Mammary epithelial cell (primary cell): ENCODE measurements at regions of chr4 and their contacts with region 1.

Region 1: DNA sequence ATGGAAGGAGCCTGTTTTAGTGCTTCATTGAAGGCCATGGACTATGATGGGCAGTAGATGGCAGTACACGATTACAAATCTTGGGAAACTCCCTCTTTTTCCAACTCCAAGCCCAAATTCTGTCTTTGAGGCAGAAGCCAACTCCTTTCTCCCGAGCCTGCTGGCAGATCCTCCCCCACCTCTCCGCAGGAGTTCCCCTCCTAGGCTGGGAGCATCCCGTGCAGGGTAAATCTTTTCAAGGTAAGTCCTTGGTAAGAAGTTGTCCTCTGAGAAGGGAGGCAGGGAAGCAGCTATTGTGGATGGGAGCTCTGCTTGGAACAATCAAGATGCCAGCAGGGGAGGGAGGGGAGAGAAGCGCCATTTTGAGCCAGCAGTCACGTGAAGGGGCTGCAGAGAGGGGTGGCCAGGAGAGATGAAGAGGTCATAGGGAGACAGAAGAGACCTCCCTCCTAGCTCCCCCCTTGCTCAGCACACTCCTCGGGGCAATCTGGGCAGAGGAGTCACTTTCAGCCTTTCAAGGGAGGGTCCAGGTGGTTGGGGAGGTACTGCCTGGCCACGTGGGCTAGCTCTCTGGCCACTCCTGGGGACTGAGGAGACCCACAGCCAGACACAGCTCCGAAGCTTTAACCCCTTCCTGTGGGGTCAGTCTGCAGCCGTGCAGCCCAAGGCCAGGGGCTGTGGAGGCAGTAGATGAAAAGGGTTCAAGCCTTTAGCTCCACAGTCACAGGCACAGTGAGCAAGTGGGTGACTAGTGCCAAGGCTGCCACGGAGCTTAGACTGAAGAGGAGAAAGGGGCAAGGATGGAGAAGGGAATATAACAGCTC is 9.6 kb downstream of the CC2D2A start:
- DNase-seq: peak; percentile 76
- H3K4me3 ChIP-seq: peak overlapping the region; percentile 42 to 61 (median 58)
- H3K27ac ChIP-seq: peak overlapping the region; percentile 47
- H3K4me1 ChIP-seq: peaks cover 3% of the 10 kb centered on the region
- H3K27me3 ChIP-seq: no peaks in the 10 kb centered on the region
- CTCF ChIP-seq: peak; percentile 71 to 79

Region 2: GRCh38 chr4:15551740-15552446 is 72.6 kb after region 1 on chr4:
- CTCF ChIA-PET with region 1: no interaction called
- dilution Hi-C with region 1: no loop called
- in situ Hi-C with region 1: no loop called
- intact Hi-C with region 1: no loop called
- DNase-seq: no peak
- H3K4me3 ChIP-seq: no peak overlapping the region
- H3K27ac ChIP-seq: no peak overlapping the region
- H3K4me1 ChIP-seq: no peaks in the 10 kb centered on the region
- H3K27me3 ChIP-seq: no peaks in the 10 kb centered on the region
- CTCF ChIP-seq: no peak

Region 3: DNA sequence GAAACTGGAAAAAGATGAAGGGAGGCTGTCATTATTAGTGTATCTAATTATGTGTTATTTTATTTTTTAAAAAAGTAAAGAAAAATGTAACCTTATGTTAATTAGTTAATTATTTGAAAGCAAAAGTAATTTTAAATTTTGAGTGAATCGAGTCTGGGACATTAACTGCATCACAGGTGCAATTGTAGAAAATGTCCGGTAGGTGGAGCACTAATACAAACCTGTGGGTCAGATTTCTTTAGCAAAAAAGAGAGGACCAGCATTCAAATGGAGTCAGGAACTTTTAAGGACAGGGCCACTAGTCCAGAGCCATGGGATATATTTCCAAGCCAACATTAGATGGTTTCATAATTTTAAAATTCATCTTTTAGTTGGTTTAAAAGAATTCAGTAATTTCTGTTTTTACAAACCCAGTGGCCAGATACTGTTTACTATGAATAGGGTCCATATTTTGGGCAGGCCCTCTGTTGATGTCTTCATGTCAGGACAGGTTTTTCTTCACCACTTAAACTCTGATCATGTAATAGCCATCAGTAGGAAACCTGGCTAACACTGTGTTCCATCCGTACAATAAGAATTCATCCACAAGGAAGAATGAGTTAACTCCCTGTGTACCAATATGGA is 250.7 kb after region 1 on chr4:
- CTCF ChIA-PET with region 1: no interaction called
- dilution Hi-C with region 1: no loop called
- in situ Hi-C with region 1: no loop called
- intact Hi-C with region 1: loop called (anchors 1 kb)
- DNase-seq: peak; percentile 33
- H3K4me3 ChIP-seq: no peak overlapping the region
- H3K27ac ChIP-seq: no peak overlapping the region
- H3K4me1 ChIP-seq: peaks cover 5% of the 10 kb centered on the region
- H3K27me3 ChIP-seq: no peaks in the 10 kb centered on the region
- CTCF ChIP-seq: peak; percentile 74

Region 4: DNA sequence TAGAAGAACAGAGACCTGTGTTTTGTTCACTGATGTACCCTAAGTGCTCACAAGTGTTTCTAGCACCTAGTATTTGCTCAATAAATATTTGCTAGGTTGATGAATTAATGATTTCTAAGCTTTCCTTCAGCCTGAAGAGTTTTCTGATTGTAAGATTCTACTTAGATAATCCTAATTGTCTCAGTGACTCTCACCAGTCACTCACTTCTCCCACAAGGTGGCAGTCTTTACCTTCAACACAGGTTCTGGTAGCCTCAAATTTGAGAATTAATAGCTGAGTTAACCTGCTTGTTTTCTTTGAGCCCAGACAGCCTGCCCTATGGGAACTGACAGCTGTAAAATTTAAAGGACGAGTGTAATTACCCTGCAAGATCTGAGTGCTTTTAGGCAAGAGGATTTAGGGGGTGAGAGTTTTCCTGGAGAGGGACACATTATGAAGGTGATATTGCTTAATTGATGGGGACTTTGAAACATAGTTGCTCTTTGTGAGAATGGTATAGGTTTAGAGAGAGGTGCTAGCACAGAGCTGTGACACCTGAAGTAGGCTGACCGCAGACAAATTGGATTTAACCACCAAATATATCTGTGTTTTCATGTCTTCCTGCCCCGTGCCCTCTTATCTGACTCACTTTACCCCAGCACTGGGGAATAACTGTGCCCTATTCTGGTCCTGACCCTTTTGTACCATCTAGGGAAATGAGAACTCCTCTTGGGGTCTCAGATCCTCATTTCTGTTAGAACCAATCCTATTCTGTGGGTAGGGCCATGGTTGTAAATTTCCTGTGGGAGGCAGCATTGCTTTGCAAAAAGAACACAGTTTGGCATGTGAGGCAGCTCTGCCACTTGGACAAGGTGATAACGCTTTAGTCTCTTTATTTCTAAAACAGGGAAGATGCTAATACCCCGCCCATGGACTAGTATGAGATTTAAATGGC is 326.5 kb after region 1 on chr4:
- CTCF ChIA-PET with region 1: interaction called, 9 read pairs
- dilution Hi-C with region 1: no loop called
- in situ Hi-C with region 1: no loop called
- intact Hi-C with region 1: loop called (anchors 1 kb)
- DNase-seq: peak; percentile 56
- H3K4me3 ChIP-seq: no peak overlapping the region
- H3K27ac ChIP-seq: no peak overlapping the region
- H3K4me1 ChIP-seq: no peaks in the 10 kb centered on the region
- H3K27me3 ChIP-seq: no peaks in the 10 kb centered on the region
- CTCF ChIP-seq: peak; percentile 82 to 86

Region 5: GRCh38 chr4:15956179-15956850 is 477.0 kb after region 1 on chr4:
- CTCF ChIA-PET with region 1: no interaction called
- dilution Hi-C with region 1: no loop called
- in situ Hi-C with region 1: loop called (anchors 25 kb)
- intact Hi-C with region 1: loop called (anchors 1 kb)
- DNase-seq: peak; percentile 68
- H3K4me3 ChIP-seq: no peak overlapping the region
- H3K27ac ChIP-seq: no peak overlapping the region
- H3K4me1 ChIP-seq: peaks cover 5% of the 10 kb centered on the region
- H3K27me3 ChIP-seq: no peaks in the 10 kb centered on the region
- CTCF ChIP-seq: peak; percentile 99 to 100

Region 6: DNA sequence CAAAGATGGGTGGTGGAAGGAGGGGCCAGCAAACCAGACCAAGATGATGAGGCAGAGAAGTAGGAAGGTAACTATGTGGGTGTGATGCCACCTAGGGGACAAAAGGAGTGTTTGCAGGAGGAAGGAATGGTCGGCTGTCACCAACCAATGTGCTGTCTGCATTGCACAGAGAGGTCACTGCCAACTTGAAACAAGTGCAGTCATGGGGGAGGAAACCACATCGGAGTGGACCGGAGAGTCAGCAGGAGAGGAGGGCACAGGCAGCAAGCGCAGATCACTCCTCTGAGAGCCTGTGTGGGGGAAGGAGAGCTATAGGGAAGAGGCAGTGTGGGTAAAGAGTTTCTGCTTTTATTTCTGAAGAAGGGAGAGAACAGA is 522.2 kb after region 1 on chr4:
- CTCF ChIA-PET with region 1: no interaction called
- dilution Hi-C with region 1: loop called (anchors 25 kb)
- in situ Hi-C with region 1: no loop called
- intact Hi-C with region 1: loop called (anchors 1 kb)
- DNase-seq: peak; percentile 56
- H3K4me3 ChIP-seq: no peak overlapping the region
- H3K27ac ChIP-seq: no peak overlapping the region
- H3K4me1 ChIP-seq: no peaks in the 10 kb centered on the region
- H3K27me3 ChIP-seq: peaks cover 6% of the 10 kb centered on the region
- CTCF ChIP-seq: peak; percentile 80 to 86